ENCODE measurements at regions of chr22 and their contacts with region 1.

Region 1: DNA sequence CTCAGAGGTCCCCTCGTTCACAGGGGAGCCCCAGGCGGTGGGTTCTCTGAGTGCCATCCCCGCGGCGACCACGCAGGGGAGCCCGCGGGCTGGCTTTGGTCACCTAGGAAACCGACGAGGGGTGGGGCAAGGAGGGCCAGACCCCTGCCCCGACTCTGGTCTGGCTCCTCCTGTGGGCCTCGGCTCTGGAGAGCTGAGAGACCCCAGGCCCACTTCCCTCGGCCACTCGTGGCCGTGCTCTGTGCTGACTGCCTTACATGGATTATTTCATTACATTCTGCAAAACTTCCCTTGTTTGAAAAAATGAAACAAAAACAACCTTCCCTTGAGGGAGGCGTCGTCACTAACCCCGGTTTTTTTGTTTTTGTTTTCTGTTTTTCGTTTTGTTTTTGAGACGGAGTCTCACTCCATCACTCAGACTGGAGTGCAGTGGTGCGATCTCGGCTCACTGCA is 15.1 kb upstream of the CYTH4 start:
- DNase-seq: peak; percentile 51 to 86 (median 71)
- ATAC-seq: peak; percentile 95
- H3K4me3 ChIP-seq: peak overlapping the region; percentile 66 to 83
- H3K4me3 Mint-ChIP-seq: peak overlapping the region; percentile 89
- H3K27ac ChIP-seq: peak overlapping the region; percentile 83 to 84
- H3K27ac Mint-ChIP-seq: peak overlapping the region; percentile 94
- H3K4me1 ChIP-seq: peaks cover 22% of the 10 kb centered on the region
- H3K4me1 Mint-ChIP-seq: peaks cover 24% of the 10 kb centered on the region
- H3K27me3 ChIP-seq: no peaks in the 10 kb centered on the region
- H3K27me3 Mint-ChIP-seq: no peaks in the 10 kb centered on the region
- CTCF ChIP-seq: peak; percentile 94

Region 2: DNA sequence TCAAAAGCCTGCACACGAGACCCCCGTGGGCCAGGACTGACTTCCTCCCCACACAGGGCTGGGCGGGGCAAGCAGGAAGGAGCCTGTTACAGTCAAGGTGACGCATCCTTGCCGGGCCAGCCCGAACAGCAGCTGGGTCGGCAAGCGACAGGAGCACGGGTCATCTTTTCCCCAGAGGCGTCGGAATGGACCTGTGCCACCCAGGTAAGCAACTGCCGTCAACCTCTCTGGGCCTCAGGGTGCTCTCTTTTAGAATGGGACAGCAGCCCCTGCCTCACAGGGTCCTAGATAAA is 15.2 kb after region 1 on chr22 and contains the start of gene CYTH4:
- CTCF ChIA-PET with region 1: interaction called, 15 read pairs
- POLR2A ChIA-PET with region 1: interaction called, 12 read pairs
- intact Hi-C with region 1: loop called (anchors 1 to 2 kb)
- DNase-seq: peak; percentile 34 to 88 (median 82)
- ATAC-seq: peak; percentile 76
- H3K4me3 ChIP-seq: peak within 1 kb of the TSS; percentile 84 to 98
- H3K4me3 Mint-ChIP-seq: peak within 1 kb of the TSS; percentile 89
- H3K27ac ChIP-seq: peak within 1 kb of the TSS; percentile 82 to 84
- H3K27ac Mint-ChIP-seq: peak within 1 kb of the TSS; percentile 98
- H3K4me1 ChIP-seq: peaks cover 45% of the 10 kb centered on the region
- H3K4me1 Mint-ChIP-seq: peaks cover 60% of the 10 kb centered on the region
- H3K27me3 ChIP-seq: no peaks in the 10 kb centered on the region
- H3K27me3 Mint-ChIP-seq: no peaks in the 10 kb centered on the region
- CTCF ChIP-seq: no peak
- total RNA-seq, gene CYTH4: 129 to 143 TPM

Region 3: DNA sequence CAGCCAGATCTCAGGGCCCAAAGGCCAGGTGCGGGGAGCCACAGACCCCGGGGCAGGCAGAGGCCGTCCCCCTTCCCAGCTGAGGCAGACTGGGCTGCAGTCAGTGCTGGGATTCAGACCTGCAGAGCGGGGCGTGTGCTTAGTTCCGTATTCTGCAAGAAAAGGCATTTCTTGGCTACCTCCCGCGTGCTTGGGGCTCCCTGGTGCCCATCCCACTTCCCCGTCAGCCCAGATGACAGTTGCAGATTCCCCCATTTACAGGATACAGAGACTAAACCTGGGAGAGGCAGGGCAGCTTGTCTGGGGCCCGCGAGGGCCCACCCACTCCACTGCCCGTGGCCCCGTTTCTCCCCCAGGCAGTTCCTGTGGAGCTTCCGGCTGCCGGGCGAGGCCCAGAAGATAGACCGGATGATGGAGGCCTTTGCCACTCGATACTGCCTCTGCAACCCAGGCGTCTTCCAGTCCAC is 33.4 kb after region 1 on chr22:
- CTCF ChIA-PET with region 1: interaction called, 13 read pairs
- POLR2A ChIA-PET with region 1: no interaction called
- intact Hi-C with region 1: no loop called
- DNase-seq: peak in 8 of 9 experiments; percentile 30 to 78 (median 51)
- ATAC-seq: peak; percentile 68
- H3K4me3 ChIP-seq: peak overlapping the region in 1 of 2 experiments; percentile 13
- H3K4me3 Mint-ChIP-seq: peak overlapping the region; percentile 64
- H3K27ac ChIP-seq: peak overlapping the region; percentile 29 to 75
- H3K27ac Mint-ChIP-seq: peak overlapping the region; percentile 94
- H3K4me1 ChIP-seq: peaks cover 80% of the 10 kb centered on the region
- H3K4me1 Mint-ChIP-seq: peaks cover 80% of the 10 kb centered on the region
- H3K27me3 ChIP-seq: no peaks in the 10 kb centered on the region
- H3K27me3 Mint-ChIP-seq: no peaks in the 10 kb centered on the region
- CTCF ChIP-seq: no peak

Region 4: GRCh38 chr22:37428649-37429586 is 161.8 kb after region 1 on chr22:
- CTCF ChIA-PET with region 1: interaction called, 40 read pairs
- POLR2A ChIA-PET with region 1: interaction called, 4 read pairs
- intact Hi-C with region 1: loop called (anchors 1 kb)
- DNase-seq: peak; percentile 30 to 80 (median 65)
- ATAC-seq: peak; percentile 62
- H3K4me3 ChIP-seq: no peak overlapping the region
- H3K4me3 Mint-ChIP-seq: peak overlapping the region; percentile 22
- H3K27ac ChIP-seq: no peak overlapping the region
- H3K27ac Mint-ChIP-seq: no peak overlapping the region
- H3K4me1 ChIP-seq: peaks cover 17% of the 10 kb centered on the region
- H3K4me1 Mint-ChIP-seq: peaks cover 22% of the 10 kb centered on the region
- H3K27me3 ChIP-seq: peaks cover 17 to 25% of the 10 kb centered on the region in 2 experiments
- H3K27me3 Mint-ChIP-seq: peaks cover 54% of the 10 kb centered on the region
- CTCF ChIP-seq: peak; percentile 54